Gastrocnemius medialis (tissue), 4 donors: ENCODE measurements at regions of chr1 and their contacts with region 1.

Region 1: GRCh38 chr1:61190618-61191432 is 108.5 kb downstream of the NFIA start:
- DNase-seq: no peak
- ATAC-seq: no peak
- H3K4me3 ChIP-seq: peak overlapping the region in 1 of 4 donors; percentile 2
- H3K27ac ChIP-seq: peak overlapping the region; percentile 29 to 70 (median 48)
- H3K4me1 ChIP-seq: peaks cover 41 to 57% of the 10 kb centered on the region in 2 donors
- H3K27me3 ChIP-seq: no peaks in the 10 kb centered on the region
- CTCF ChIP-seq: no peak
- POLR2A ChIP-seq: no peak

Region 2: GRCh38 chr1:61226784-61227567 is 36.2 kb after region 1 on chr1:
- in situ Hi-C with region 1: no loop called
- intact Hi-C with region 1: loop called (anchors 2 kb)
- DNase-seq: peak in 1 of 2 donors; percentile 35
- ATAC-seq: peak; percentile 45 to 61
- H3K4me3 ChIP-seq: peak overlapping the region; percentile 8 to 39 (median 16)
- H3K27ac ChIP-seq: peak overlapping the region; percentile 49 to 64 (median 55)
- H3K4me1 ChIP-seq: peaks cover 36 to 47% of the 10 kb centered on the region in 2 donors
- H3K27me3 ChIP-seq: no peaks in the 10 kb centered on the region
- CTCF ChIP-seq: no peak
- POLR2A ChIP-seq: no peak